ENCODE measurements at regions of chr11 and their contacts with region 1.

Region 1: DNA sequence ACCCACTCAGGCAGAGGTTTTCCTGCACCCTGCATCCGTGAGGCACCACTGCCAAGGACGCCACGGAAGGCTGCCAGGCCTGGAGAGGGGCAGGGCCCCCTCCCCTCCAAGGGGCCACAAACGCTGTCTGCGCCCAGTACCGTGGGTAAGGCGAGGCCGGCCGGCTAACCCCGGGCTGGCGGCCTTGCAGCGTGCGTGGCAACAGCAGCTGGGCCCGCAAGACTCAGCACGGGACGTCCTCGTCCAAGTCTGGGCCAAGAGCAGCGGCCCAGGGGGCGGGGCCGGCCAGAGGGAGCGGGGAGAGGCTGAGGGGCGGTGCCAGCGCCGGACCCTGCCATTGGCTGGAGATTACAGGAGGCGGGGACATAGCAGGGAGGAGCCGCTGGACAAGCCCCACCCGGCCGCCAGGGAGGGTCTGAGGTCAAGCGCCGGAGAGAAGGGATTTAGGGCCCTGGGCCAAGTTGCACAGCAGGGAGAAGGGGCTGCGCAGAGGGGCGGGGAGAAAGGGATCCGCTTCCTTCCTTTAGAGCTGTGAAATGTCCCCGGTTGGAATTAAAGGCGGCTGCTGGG is 16.0 kb downstream of the SLC43A1 start:
- DNase-seq: peak; percentile 72 to 97
- H3K4me3 ChIP-seq: peak overlapping the region; percentile 39 to 55
- H3K27ac ChIP-seq: peak overlapping the region; percentile 71 to 77
- H3K4me1 ChIP-seq: peaks cover 4 to 12% of the 10 kb centered on the region in 2 donors
- H3K27me3 ChIP-seq: no peaks in the 10 kb centered on the region
- CTCF ChIP-seq: no peak

Region 2: GRCh38 chr11:57368106-57368844 is 131.2 kb before region 1 on chr11:
- intact Hi-C with region 1: no loop called
- DNase-seq: no peak
- H3K4me3 ChIP-seq: no peak overlapping the region
- H3K27ac ChIP-seq: no peak overlapping the region
- H3K4me1 ChIP-seq: no peaks in the 10 kb centered on the region
- H3K27me3 ChIP-seq: no peaks in the 10 kb centered on the region
- CTCF ChIP-seq: no peak

Region 3: GRCh38 chr11:57402188-57403002 is 97.1 kb before region 1 on chr11:
- intact Hi-C with region 1: no loop called
- DNase-seq: no peak
- H3K4me3 ChIP-seq: no peak overlapping the region
- H3K27ac ChIP-seq: no peak overlapping the region
- H3K4me1 ChIP-seq: peaks cover 0 to 3% of the 10 kb centered on the region in 2 donors
- H3K27me3 ChIP-seq: no peaks in the 10 kb centered on the region
- CTCF ChIP-seq: no peak

Region 4: GRCh38 chr11:57515332-57516060 is 16.0 kb after region 1 on chr11 and contains the start of gene SLC43A1:
- intact Hi-C with region 1: loop called (anchors 2 kb)
- DNase-seq: peak in 1 of 2 donors; percentile 71
- H3K4me3 ChIP-seq: peak within 1 kb of the TSS; percentile 72 to 86
- H3K27ac ChIP-seq: peak within 1 kb of the TSS; percentile 56 to 60
- H3K4me1 ChIP-seq: peaks cover 0 to 8% of the 10 kb centered on the region in 2 donors
- H3K27me3 ChIP-seq: no peaks in the 10 kb centered on the region
- CTCF ChIP-seq: no peak
- total RNA-seq, gene SLC43A1: 18.4 TPM